ENCODE measurements at regions of chr1 and their contacts with region 1.

Region 1: DNA sequence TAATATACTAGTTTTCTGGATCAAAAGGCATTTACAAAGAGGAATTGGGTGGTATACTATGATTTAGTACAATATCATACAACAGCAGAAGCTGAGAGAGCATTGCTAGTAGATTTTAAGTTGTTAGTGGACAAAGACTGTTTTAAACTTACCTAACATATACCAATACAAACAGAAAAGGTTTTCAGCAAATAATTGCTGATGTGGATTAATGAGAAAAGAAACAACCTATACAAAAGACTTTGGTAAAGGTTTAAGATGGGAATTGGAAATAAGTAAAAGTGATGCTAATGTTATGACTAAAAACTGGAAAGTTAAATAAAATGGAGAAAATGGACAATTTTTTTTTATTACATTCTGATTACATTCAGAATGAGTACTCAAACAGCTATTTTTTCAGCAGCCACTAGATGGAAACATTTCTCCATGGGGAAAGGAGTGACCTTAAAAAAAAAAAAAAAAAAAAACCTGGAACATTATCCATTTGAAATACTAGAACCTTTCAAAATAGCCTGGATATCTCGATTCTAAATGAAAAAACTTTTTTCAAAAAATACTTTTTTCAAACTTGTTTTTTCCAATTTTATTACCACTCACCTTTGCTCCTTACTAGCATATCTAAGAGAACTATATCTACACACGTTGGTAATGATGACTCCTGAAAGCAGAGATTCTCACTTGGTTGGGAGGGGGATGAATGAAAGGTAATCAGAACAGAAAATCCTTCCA is 55.4 kb downstream of the EPRS1 start:
- DNase-seq: peak in 2 of 9 experiments; percentile 14 to 36
- ATAC-seq: no peak
- H3K4me3 ChIP-seq: no peak overlapping the region
- H3K4me3 Mint-ChIP-seq: no peak overlapping the region
- H3K27ac ChIP-seq: no peak overlapping the region
- H3K27ac Mint-ChIP-seq: peak overlapping the region; percentile 38
- H3K4me1 ChIP-seq: no peaks in the 10 kb centered on the region
- H3K4me1 Mint-ChIP-seq: no peaks in the 10 kb centered on the region
- H3K27me3 ChIP-seq: no peaks in the 10 kb centered on the region
- H3K27me3 Mint-ChIP-seq: no peaks in the 10 kb centered on the region
- CTCF ChIP-seq: peak; percentile 50

Region 2: DNA sequence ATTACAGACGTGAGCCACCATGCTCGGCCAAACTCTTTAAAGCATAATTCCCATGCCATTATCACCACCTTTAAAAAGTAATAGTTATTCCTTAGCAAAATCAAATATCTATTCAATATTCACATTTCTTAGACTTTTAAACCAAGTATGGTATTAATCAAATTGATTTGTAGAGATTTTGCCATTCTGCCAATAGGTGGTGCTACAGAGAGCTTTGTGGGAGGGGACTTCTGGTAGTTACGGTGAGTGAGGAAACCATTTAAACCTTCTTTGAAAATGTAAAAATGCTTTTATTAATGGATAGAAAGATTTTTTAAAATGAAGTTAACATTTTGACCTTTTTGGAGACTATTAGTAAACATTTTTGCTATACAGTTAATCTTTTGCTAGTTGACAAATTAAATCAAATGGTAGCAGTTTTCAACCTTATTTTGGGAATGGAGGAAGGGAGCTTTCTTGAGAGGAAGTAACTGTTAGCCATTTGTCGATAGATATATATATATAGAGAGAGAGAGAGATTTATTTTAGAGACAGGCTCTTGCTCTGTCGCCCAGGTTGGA is 122.3 kb after region 1 on chr1:
- CTCF ChIA-PET with region 1: no interaction called
- POLR2A ChIA-PET with region 1: no interaction called
- intact Hi-C with region 1: loop called in 1 of 2 experiments (anchors 10 kb)
- DNase-seq: peak in 5 of 9 experiments; percentile 17 to 73 (median 23)
- ATAC-seq: peak; percentile 95
- H3K4me3 ChIP-seq: no peak overlapping the region
- H3K4me3 Mint-ChIP-seq: peak overlapping the region; percentile 1
- H3K27ac ChIP-seq: no peak overlapping the region
- H3K27ac Mint-ChIP-seq: no peak overlapping the region
- H3K4me1 ChIP-seq: no peaks in the 10 kb centered on the region
- H3K4me1 Mint-ChIP-seq: peaks cover 6% of the 10 kb centered on the region
- H3K27me3 ChIP-seq: no peaks in the 10 kb centered on the region
- H3K27me3 Mint-ChIP-seq: no peaks in the 10 kb centered on the region
- CTCF ChIP-seq: peak; percentile 76

Region 3: GRCh38 chr1:220123889-220124288 is 132.9 kb after region 1 on chr1:
- CTCF ChIA-PET with region 1: interaction called, 3 read pairs
- POLR2A ChIA-PET with region 1: no interaction called
- intact Hi-C with region 1: loop called (anchors 5 to 10 kb)
- DNase-seq: peak in 2 of 9 experiments; percentile 17 to 35
- ATAC-seq: no peak
- H3K4me3 ChIP-seq: no peak overlapping the region
- H3K4me3 Mint-ChIP-seq: no peak overlapping the region
- H3K27ac ChIP-seq: no peak overlapping the region
- H3K27ac Mint-ChIP-seq: no peak overlapping the region
- H3K4me1 ChIP-seq: no peaks in the 10 kb centered on the region
- H3K4me1 Mint-ChIP-seq: peaks cover 7% of the 10 kb centered on the region
- H3K27me3 ChIP-seq: no peaks in the 10 kb centered on the region
- H3K27me3 Mint-ChIP-seq: no peaks in the 10 kb centered on the region
- CTCF ChIP-seq: no peak

Region 4: DNA sequence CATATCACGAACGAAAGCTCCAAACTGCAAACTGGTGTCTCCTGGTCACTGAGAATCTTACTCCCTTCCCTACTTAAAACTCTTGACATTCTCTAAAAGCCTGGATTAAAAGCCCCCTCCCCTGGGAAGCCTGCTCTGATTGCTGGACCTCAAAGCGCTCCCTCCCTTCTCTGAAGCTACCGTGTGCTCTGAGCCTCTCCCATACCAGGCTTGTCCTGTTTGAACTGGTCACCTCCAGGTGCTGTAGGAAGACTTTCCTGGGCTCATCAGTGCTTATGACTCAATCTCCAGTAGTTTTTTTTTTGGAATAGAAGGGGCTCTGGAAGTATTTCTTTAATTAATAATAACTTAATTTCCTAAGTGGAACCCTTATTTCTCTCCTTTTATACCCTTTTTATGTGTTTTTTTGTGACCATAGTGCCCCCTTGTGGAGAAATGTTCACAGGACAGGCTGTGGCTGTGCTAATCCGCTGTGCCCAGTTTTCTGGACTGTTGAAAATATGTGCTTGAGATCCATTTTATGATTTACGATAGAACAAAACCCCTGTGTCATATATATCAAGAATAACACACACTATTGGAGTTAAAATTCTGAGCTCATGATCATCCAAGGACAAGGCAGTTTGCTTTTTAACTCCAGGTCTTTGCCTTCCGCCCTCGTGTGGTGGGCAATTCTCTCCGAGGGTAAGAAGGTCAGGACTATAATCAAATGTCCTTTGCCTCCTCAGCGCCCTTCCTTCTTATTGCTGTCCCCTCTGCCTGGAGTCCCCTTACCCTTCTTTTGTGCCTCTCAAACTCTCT is 812.7 kb after region 1 on chr1:
- CTCF ChIA-PET with region 1: no interaction called
- POLR2A ChIA-PET with region 1: no interaction called
- intact Hi-C with region 1: loop called in 1 of 2 experiments (anchors 10 kb)
- DNase-seq: peak in 3 of 9 experiments; percentile 10 to 28 (median 13)
- ATAC-seq: no peak
- H3K4me3 ChIP-seq: no peak overlapping the region
- H3K4me3 Mint-ChIP-seq: no peak overlapping the region
- H3K27ac ChIP-seq: no peak overlapping the region
- H3K27ac Mint-ChIP-seq: no peak overlapping the region
- H3K4me1 ChIP-seq: no peaks in the 10 kb centered on the region
- H3K4me1 Mint-ChIP-seq: no peaks in the 10 kb centered on the region
- H3K27me3 ChIP-seq: no peaks in the 10 kb centered on the region
- H3K27me3 Mint-ChIP-seq: peaks cover 12% of the 10 kb centered on the region
- CTCF ChIP-seq: peak; percentile 67